B cell (primary cell): ENCODE measurements at regions of chr14 and their contacts with region 1.

Region 1: DNA sequence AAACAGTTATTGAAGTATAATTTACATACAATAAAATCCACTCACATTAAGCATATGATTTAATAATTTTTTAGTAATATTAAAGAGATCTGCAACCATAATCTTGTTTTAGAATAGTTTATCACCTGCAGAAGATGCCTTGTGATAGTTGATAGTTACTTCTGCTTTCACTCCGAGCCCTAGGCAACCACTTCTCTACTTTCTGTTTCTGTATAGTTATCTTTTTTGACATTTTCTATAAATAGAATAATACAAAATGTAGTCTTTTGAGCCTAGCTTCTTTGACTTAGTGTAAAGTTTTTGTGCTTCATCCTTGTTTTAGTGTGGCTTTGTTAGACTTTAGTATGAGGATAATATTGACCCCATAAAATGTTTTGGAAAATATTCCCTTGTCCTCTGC is 111.0 kb downstream of the MNAT1 start:
- DNase-seq: peak; percentile 68
- ATAC-seq: peak; percentile 75
- H3K4me3 ChIP-seq: peak overlapping the region in 1 of 5 experiments; percentile 48
- H3K4me3 Mint-ChIP-seq: peak overlapping the region; percentile 10
- H3K27ac ChIP-seq: peak overlapping the region; percentile 69 to 80
- H3K27ac Mint-ChIP-seq: peak overlapping the region; percentile 77
- H3K4me1 ChIP-seq: peaks cover 8 to 16% of the 10 kb centered on the region in 2 donors
- H3K4me1 Mint-ChIP-seq: peaks cover 15% of the 10 kb centered on the region
- H3K27me3 ChIP-seq: no peaks in the 10 kb centered on the region
- H3K27me3 Mint-ChIP-seq: no peaks in the 10 kb centered on the region
- CTCF ChIP-seq: no peak

Region 2: GRCh38 chr14:59161561-59162175 is 1683.9 kb before region 1 on chr14:
- CTCF ChIA-PET with region 1: no interaction called
- POLR2A ChIA-PET with region 1: no interaction called
- intact Hi-C with region 1: no loop called
- DNase-seq: no peak
- ATAC-seq: no peak
- H3K4me3 ChIP-seq: no peak overlapping the region
- H3K4me3 Mint-ChIP-seq: no peak overlapping the region
- H3K27ac ChIP-seq: no peak overlapping the region
- H3K27ac Mint-ChIP-seq: no peak overlapping the region
- H3K4me1 ChIP-seq: peaks cover 0 to 8% of the 10 kb centered on the region in 2 donors
- H3K4me1 Mint-ChIP-seq: no peaks in the 10 kb centered on the region
- H3K27me3 ChIP-seq: peaks cover 0 to 13% (median 6%) of the 10 kb centered on the region in 4 experiments
- H3K27me3 Mint-ChIP-seq: peaks cover 12% of the 10 kb centered on the region
- CTCF ChIP-seq: no peak

Region 3: DNA sequence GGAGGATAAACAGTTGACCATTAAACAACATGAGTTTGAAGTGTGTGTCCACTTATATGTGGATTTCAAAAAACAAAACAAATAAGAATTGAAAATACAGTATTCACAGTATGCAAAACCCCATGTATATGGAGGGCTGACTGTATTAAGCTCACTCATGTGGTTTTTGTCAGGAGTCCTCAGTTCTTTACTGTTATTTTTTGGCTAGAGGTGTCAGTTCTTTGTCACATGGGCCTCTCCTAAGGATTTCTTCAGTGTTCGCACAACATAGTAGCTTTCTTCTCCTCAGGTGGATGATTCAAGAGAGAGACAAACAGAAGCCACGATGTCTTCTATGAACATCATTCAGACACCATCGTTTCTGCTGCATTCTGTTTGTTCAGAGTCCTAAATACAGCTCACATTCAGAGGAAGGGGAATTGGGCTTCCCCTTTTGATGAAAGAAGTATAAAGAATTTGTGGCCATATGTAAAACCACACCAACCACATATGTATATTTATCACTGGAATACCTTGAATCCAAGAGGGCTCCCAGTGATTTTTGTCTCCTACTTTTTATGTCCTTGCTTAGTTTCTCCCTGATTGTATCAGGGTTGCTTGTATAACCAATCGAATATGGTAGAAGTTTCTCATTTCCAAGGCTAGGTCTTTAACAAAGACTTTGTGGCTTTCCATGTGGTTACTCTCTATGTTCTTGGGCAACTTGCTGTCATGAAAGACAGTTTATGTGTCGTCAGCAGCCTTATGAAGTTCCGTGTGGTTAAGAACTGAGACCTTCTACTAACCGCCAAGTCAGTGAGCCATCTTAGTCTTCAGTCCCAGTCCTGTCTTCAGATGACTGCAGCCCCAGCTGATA is 92.0 kb before region 1 on chr14:
- CTCF ChIA-PET with region 1: no interaction called
- POLR2A ChIA-PET with region 1: no interaction called
- intact Hi-C with region 1: loop called (anchors 10 kb)
- DNase-seq: peak; percentile 81
- ATAC-seq: peak; percentile 88
- H3K4me3 ChIP-seq: no peak overlapping the region
- H3K4me3 Mint-ChIP-seq: peak overlapping the region; percentile 30
- H3K27ac ChIP-seq: peak overlapping the region in 1 of 2 donors; percentile 11
- H3K27ac Mint-ChIP-seq: peak overlapping the region; percentile 79
- H3K4me1 ChIP-seq: peaks cover 23 to 31% of the 10 kb centered on the region in 2 donors
- H3K4me1 Mint-ChIP-seq: peaks cover 34% of the 10 kb centered on the region
- H3K27me3 ChIP-seq: peaks cover 0 to 2% (median 0%) of the 10 kb centered on the region in 4 experiments
- H3K27me3 Mint-ChIP-seq: no peaks in the 10 kb centered on the region
- CTCF ChIP-seq: no peak